ENCODE measurements at regions of chr4 and their contacts with region 1.

Region 1: GRCh38 chr4:39134683-39135319 is 47.5 kb upstream of the WDR19 start:
- DNase-seq: no peak
- ATAC-seq: no peak
- H3K4me3 ChIP-seq: no peak overlapping the region
- H3K4me3 Mint-ChIP-seq: no peak overlapping the region
- H3K27ac ChIP-seq: no peak overlapping the region
- H3K27ac Mint-ChIP-seq: peak overlapping the region; percentile 54
- H3K4me1 ChIP-seq: peaks cover 6 to 12% of the 10 kb centered on the region in 2 donors
- H3K4me1 Mint-ChIP-seq: peaks cover 14% of the 10 kb centered on the region
- H3K27me3 ChIP-seq: no peaks in the 10 kb centered on the region
- H3K27me3 Mint-ChIP-seq: no peaks in the 10 kb centered on the region
- CTCF ChIP-seq: no peak

Region 2: DNA sequence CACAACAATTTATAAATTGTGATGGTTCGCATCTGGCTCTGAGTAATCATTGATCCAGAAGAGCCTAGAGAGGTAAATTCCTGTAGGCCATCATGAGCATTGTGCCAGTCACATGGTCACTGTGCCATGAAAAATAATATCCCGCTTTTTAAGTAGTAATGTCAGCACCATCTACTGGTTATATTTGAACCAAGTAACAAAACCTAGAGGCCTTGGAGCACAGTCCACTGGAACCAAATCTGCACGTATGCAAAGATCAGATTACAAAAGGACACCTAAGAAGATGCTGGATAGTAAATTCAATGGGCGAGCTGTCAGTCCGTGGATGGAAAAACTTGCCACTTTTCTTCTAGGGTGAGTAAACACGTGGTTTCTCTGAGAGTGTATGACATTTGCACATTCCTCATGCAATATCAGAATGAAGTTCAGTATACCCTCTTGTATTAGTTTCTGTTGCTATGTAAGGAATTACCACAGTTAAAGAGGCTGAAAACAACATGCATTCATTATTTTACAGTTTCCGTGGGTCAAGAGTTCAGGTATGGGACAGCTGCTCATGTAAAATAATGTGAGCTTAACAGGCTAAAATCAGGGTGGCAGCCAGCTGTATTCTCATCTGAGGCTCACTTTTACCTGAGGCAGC is 240.3 kb before region 1 on chr4:
- CTCF ChIA-PET with region 1: interaction called, 258 read pairs
- POLR2A ChIA-PET with region 1: interaction called, 4 read pairs
- intact Hi-C with region 1: no loop called
- DNase-seq: no peak
- ATAC-seq: no peak
- H3K4me3 ChIP-seq: no peak overlapping the region
- H3K4me3 Mint-ChIP-seq: no peak overlapping the region
- H3K27ac ChIP-seq: no peak overlapping the region
- H3K27ac Mint-ChIP-seq: no peak overlapping the region
- H3K4me1 ChIP-seq: no peaks in the 10 kb centered on the region
- H3K4me1 Mint-ChIP-seq: peaks cover under 1% of the 10 kb centered on the region
- H3K27me3 ChIP-seq: no peaks in the 10 kb centered on the region
- H3K27me3 Mint-ChIP-seq: no peaks in the 10 kb centered on the region
- CTCF ChIP-seq: no peak

Region 3: GRCh38 chr4:39044364-39044955 is 90.3 kb before region 1 on chr4:
- CTCF ChIA-PET with region 1: interaction called, 4 read pairs
- POLR2A ChIA-PET with region 1: no interaction called
- intact Hi-C with region 1: loop called (anchors 2 kb)
- DNase-seq: peak; percentile 99
- ATAC-seq: peak; percentile 85
- H3K4me3 ChIP-seq: peak overlapping the region; percentile 66 to 94 (median 75)
- H3K4me3 Mint-ChIP-seq: peak overlapping the region; percentile 80
- H3K27ac ChIP-seq: peak overlapping the region; percentile 93 to 95
- H3K27ac Mint-ChIP-seq: peak overlapping the region; percentile 90
- H3K4me1 ChIP-seq: peaks cover 45 to 48% of the 10 kb centered on the region in 2 donors
- H3K4me1 Mint-ChIP-seq: peaks cover 59% of the 10 kb centered on the region
- H3K27me3 ChIP-seq: no peaks in the 10 kb centered on the region
- H3K27me3 Mint-ChIP-seq: no peaks in the 10 kb centered on the region
- CTCF ChIP-seq: no peak

Region 4: DNA sequence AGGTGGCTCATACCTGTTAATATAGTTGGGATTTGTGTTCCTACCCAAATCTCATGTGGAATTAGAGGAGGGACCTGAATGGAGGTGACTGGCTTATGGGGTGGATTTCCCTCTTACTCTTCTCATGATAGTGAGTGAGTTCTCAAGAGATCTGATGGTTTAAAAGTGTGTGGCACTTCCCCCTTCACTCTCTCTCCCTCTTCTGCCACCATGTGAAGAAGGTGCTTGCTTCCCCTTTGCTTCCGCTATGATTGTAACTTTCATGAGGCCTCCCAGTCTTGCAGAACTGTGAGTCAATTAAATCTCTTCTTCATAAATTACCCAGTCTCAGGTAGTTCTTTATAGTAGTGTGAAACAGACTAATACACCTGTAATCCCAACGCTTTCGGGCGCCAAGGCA is 19.2 kb after region 1 on chr4:
- CTCF ChIA-PET with region 1: no interaction called
- POLR2A ChIA-PET with region 1: no interaction called
- intact Hi-C with region 1: no loop called
- DNase-seq: no peak
- ATAC-seq: no peak
- H3K4me3 ChIP-seq: no peak overlapping the region
- H3K4me3 Mint-ChIP-seq: no peak overlapping the region
- H3K27ac ChIP-seq: no peak overlapping the region
- H3K27ac Mint-ChIP-seq: no peak overlapping the region
- H3K4me1 ChIP-seq: peaks cover 0 to 8% of the 10 kb centered on the region in 2 donors
- H3K4me1 Mint-ChIP-seq: peaks cover 7% of the 10 kb centered on the region
- H3K27me3 ChIP-seq: no peaks in the 10 kb centered on the region
- H3K27me3 Mint-ChIP-seq: no peaks in the 10 kb centered on the region
- CTCF ChIP-seq: no peak

Region 5: GRCh38 chr4:39166177-39166576 is 31.4 kb after region 1 on chr4:
- CTCF ChIA-PET with region 1: interaction called, 11 read pairs
- POLR2A ChIA-PET with region 1: no interaction called
- intact Hi-C with region 1: no loop called
- DNase-seq: peak; percentile 74
- ATAC-seq: peak; percentile 88
- H3K4me3 ChIP-seq: peak overlapping the region in 2 of 5 experiments; percentile 16 to 48
- H3K4me3 Mint-ChIP-seq: peak overlapping the region; percentile 75
- H3K27ac ChIP-seq: peak overlapping the region; percentile 92 to 94
- H3K27ac Mint-ChIP-seq: peak overlapping the region; percentile 88
- H3K4me1 ChIP-seq: peaks cover 36 to 38% of the 10 kb centered on the region in 2 donors
- H3K4me1 Mint-ChIP-seq: peaks cover 51% of the 10 kb centered on the region
- H3K27me3 ChIP-seq: no peaks in the 10 kb centered on the region
- H3K27me3 Mint-ChIP-seq: no peaks in the 10 kb centered on the region
- CTCF ChIP-seq: no peak